H1 (cell line): ENCODE measurements at regions of chr4 and their contacts with region 1.

Region 1: GRCh38 chr4:76758290-76758882 is 139.6 kb downstream of the SOWAHB start:
- DNase-seq: peak in 1 of 2 experiments; percentile 55
- H3K4me3 ChIP-seq: no peak overlapping the region
- H3K27ac ChIP-seq: no peak overlapping the region
- H3K4me1 ChIP-seq: no peaks in the 10 kb centered on the region
- H3K27me3 ChIP-seq: no peaks in the 10 kb centered on the region
- CTCF ChIP-seq: peak; percentile 44 to 68 (median 55)
- EP300 ChIP-seq: no peak
- POLR2A ChIP-seq: no peak
- RAD21 ChIP-seq: peak; percentile 42 to 61

Region 2: DNA sequence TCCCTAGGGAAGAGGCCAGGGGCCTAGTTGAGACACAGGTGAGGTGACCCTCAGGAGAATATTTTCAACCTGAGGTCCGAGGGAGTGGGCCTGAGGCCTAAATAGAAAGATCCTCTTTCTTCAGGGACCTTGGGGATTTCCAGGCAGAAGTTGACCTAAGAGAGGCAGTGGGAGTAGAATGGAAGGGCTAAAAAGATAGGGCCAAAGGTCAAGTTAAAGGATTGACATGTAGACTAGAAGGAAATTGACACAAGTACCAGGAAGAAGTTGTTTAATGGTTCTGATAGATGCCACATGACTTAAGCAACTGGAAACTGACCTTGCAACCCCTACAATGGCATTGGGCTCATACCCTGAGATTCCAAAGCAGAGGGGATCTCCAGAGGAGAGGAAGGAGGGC is 246.4 kb before region 1 on chr4:
- CTCF ChIA-PET with region 1: interaction called, 15 read pairs
- POLR2A ChIA-PET with region 1: no interaction called
- DNase-seq: no peak
- H3K4me3 ChIP-seq: no peak overlapping the region
- H3K27ac ChIP-seq: no peak overlapping the region
- H3K4me1 ChIP-seq: no peaks in the 10 kb centered on the region; a peak in 1 of 7 replicates
- H3K27me3 ChIP-seq: no peaks in the 10 kb centered on the region
- CTCF ChIP-seq: no peak
- EP300 ChIP-seq: no peak
- POLR2A ChIP-seq: no peak
- RAD21 ChIP-seq: no peak

Region 3: GRCh38 chr4:76733068-76733771 is 25.2 kb before region 1 on chr4:
- CTCF ChIA-PET with region 1: interaction called, 10 read pairs
- POLR2A ChIA-PET with region 1: interaction called, 3 read pairs
- DNase-seq: peak; percentile 57 to 64
- H3K4me3 ChIP-seq: no peak overlapping the region
- H3K27ac ChIP-seq: no peak overlapping the region
- H3K4me1 ChIP-seq: peaks cover 5 to 24% (median 16%) of the 10 kb centered on the region in 4 experiments
- H3K27me3 ChIP-seq: no peaks in the 10 kb centered on the region
- CTCF ChIP-seq: peak; percentile 65 to 77 (median 70)
- EP300 ChIP-seq: peak in 1 of 2 experiments; percentile 75; a peak in 1 of 3 replicates
- POLR2A ChIP-seq: no peak
- RAD21 ChIP-seq: peak; percentile 90 to 92

Region 4: DNA sequence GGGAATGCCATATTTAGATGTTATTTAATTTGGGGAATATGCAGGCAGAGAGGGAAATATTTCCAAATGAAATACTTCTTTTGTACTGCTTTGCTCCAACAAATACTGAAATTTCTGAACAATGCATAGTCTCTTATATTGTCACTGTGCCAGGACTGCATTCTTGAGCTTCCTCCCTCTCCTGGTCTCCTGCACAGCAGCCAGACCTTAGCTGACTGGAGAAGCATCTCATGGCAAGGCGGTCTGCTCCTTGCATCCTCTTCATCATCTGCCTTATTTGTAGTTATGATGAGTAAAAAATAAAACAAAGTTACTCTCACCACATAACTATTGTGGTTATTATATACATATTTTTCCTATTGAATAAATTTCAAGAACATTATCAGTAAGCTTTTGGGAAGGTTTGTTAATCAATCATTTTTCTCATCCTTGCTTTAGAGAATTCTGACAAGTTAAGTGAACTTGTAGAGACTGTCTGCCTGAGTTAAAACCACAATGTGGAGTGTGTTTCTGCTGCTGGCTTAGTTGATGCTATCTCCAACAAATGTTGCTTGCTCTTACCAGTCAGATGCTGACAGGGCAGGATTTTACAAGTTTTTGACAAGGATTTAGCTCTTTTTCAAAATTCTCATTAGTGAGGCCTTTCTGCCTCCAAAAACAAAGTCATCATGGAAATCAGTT is 14.0 kb before region 1 on chr4:
- CTCF ChIA-PET with region 1: interaction called, 37 read pairs
- POLR2A ChIA-PET with region 1: no interaction called
- DNase-seq: no peak
- H3K4me3 ChIP-seq: no peak overlapping the region
- H3K27ac ChIP-seq: no peak overlapping the region
- H3K4me1 ChIP-seq: 0 out of 7 replicates have a peak, but pooled peaks cover 0 to 2% (median 0%) of the 10 kb centered on the region in 4 experiments
- H3K27me3 ChIP-seq: no peaks in the 10 kb centered on the region
- CTCF ChIP-seq: no peak
- EP300 ChIP-seq: no peak
- POLR2A ChIP-seq: no peak
- RAD21 ChIP-seq: no peak